Calu3 (cell line): ENCODE measurements at regions of chr5 and their contacts with region 1.

Region 1: DNA sequence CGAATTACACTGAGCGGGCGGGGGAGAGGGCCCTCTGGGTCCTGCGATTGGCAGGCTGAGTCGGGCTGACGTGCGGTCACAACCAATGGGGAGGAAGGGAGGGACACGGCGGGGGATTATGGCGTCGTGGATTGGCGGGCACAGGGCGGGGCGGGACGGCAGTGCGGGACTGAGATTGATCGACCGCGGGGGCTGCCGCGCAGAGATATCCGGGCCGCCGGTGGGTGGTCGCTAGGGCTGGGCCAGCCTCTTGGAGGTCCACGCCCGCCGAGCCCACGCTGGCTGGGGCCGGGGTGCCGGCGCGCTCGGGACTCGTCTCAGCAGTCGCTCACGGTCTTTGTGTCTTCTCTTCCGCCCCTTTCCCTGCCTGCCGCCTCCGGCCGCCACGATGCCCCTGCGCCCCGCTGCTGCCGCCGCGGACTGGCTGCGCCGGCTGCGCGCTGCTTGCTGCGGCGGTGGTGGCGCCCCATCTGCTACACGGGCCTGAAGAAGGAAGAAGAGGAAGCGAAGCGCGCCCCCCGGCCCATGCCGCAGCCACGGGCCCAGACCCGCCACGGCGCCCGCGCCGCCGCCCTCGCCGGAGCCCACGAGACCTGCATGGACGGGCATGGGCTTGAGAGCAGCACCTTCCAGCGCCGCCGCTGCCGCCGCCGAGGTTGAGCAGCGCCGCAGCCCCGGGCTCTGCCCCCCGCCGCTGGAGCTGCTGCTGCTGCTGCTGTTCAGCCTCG is at the start of gene RGMB:
- DNase-seq: peak; percentile 99
- H3K4me3 Mint-ChIP-seq: peak within 1 kb of the TSS; percentile 82
- H3K27ac Mint-ChIP-seq: peak within 1 kb of the TSS; percentile 70
- H3K4me1 Mint-ChIP-seq: peaks cover 47% of the 10 kb centered on the region
- H3K27me3 Mint-ChIP-seq: no peaks in the 10 kb centered on the region
- CTCF ChIP-seq: no peak
- total RNA-seq, gene RGMB: 34.5 and 35.8 TPM in 2 replicates

Region 2: DNA sequence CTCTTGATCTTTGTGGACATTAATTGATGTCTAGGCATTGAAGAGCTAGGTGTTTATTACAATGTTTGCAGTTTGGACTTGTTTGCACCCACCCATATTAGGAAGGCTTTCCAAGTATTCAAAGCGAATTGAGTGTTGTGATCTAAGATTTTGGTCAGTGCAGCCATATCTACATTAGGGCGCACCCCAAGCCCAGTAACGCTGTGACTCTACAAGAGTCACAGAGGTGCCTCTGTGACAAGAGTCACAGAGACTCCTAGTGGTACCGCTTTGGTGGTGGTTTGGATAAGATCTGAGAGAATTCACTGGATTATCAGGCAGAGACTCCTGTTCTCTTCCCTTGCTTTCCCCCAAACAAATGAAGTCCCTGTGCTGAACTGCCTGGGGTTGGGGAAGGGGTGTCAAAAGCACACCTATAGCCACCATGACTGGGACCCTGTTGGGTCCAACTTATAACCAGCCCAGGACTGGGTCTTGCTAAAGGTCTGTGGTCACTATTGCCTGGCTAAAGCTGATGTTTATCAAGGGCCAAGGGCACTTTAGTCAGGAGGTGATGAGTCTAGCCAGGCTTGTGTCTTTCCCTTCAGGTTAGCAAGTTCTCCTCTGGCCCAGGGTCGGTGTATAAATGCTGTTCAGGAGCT is 1476.4 kb before region 1 on chr5:
- CTCF ChIA-PET with region 1: no interaction called
- intact Hi-C with region 1: loop called (anchors 1 kb)
- DNase-seq: peak; percentile 63
- H3K4me3 Mint-ChIP-seq: no peak overlapping the region
- H3K27ac Mint-ChIP-seq: no peak overlapping the region
- H3K4me1 Mint-ChIP-seq: no peaks in the 10 kb centered on the region
- H3K27me3 Mint-ChIP-seq: no peaks in the 10 kb centered on the region
- CTCF ChIP-seq: peak; percentile 59

Region 3: DNA sequence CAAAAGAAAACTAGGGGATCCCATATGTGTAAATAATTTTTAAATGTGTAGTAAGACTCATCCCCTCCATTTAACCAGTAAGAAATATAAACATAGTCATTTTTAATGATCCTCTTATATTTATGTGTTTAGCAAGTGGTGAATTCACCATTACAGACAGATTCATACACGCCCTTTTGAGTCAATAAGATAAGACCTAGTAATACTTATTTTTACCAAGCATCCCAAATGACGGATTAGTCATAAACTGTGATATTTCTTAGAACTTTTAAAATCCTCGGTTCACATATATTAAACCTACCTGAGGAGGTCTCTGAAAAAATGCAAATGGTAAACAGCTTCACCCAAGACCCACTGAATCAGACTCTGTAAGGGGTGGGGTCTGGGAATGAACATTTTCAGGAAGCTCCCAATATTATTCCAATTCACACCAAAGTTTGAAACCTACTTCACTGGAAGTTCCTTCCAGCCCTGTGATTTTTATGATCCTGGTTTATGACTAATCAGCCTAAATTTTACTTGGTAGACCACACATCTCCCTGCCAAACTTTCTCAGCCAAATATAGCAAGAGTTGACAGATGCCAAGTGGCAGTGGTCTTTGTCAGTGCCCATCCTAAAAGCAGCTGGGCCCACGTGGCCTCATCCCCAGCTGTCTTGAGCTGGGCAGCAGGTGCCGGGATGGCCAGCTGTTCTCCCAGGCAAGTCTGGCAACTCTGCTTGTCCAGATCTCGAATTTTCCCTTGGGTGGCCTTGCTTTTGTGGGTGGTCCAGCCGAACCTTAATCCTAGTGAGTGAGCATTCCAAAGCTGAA is 559.2 kb before region 1 on chr5:
- CTCF ChIA-PET with region 1: no interaction called
- intact Hi-C with region 1: loop called (anchors 5 kb)
- DNase-seq: no peak
- H3K4me3 Mint-ChIP-seq: no peak overlapping the region
- H3K27ac Mint-ChIP-seq: no peak overlapping the region
- H3K4me1 Mint-ChIP-seq: no peaks in the 10 kb centered on the region
- H3K27me3 Mint-ChIP-seq: no peaks in the 10 kb centered on the region
- CTCF ChIP-seq: no peak

Region 4: GRCh38 chr5:98556712-98557111 is 216.9 kb before region 1 on chr5:
- CTCF ChIA-PET with region 1: no interaction called
- intact Hi-C with region 1: no loop called
- DNase-seq: no peak
- H3K4me3 Mint-ChIP-seq: no peak overlapping the region
- H3K27ac Mint-ChIP-seq: no peak overlapping the region
- H3K4me1 Mint-ChIP-seq: no peaks in the 10 kb centered on the region
- H3K27me3 Mint-ChIP-seq: no peaks in the 10 kb centered on the region
- CTCF ChIP-seq: no peak

Region 5: DNA sequence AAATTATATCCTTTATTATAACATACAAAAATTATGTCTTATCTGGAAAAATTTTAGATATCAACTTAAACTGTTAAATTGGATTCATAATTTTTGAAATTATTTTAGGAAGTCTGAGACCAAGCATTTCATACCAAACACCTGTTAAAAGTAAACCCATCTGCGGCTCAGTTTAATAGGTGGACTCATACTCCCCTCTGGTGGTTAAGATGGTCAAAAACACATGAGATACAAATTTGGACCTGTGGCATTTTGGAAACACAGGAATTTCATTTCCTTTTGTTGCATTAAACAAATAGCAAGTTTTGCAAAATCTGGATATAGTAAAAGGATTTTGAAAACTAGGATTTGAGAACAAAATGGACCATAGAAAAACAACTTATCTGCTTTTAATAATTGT is 53.5 kb after region 1 on chr5:
- CTCF ChIA-PET with region 1: no interaction called
- intact Hi-C with region 1: loop called (anchors 1 kb)
- DNase-seq: peak; percentile 39
- H3K4me3 Mint-ChIP-seq: no peak overlapping the region
- H3K27ac Mint-ChIP-seq: no peak overlapping the region
- H3K4me1 Mint-ChIP-seq: no peaks in the 10 kb centered on the region
- H3K27me3 Mint-ChIP-seq: no peaks in the 10 kb centered on the region
- CTCF ChIP-seq: peak; percentile 29

Region 6: DNA sequence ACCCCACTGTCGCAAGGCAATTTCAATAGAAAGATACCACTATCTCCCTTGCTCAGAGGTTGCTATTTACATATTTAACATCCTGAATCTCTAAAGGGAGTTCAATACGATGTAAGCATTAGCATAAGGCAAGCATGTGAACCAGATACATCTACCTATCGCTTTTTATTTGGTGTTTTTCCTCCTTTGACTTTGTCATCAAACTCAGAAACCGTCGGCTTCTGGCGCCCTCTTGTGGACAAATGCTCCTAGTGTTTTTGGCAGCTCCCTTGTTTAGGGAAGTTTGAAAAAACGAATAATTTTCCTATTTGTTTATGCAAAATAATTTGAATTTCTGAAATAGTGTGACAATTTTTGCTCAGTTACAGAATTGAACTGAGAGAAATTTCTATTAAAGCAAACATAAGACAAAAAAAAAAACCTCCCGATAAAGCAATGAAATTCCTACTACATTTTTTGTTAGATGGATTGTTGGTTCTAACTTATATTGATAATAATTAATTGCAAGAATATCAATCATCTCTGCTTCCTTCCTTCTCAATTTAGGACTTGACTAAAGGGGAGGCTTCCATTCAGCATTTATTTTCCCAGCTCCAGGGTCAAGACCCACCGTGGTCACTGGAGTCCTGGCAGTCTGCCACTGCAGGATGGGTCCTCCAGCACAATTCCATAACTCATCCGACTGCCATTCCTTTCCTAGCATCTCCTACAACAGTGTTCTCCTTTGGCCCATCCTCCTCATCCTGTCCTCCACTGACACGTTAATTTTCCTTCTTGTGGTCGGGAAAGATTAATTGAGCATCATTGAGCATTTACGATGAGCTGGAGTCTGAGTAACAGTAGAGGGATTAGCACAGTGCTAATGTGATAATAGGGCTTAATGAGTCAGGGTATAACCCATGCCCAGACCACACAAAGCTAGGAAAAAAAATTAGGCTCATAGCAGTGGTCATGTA is 287.0 kb after region 1 on chr5:
- CTCF ChIA-PET with region 1: interaction called, 3 read pairs
- intact Hi-C with region 1: loop called (anchors 5 kb)
- DNase-seq: peak; percentile 87
- H3K4me3 Mint-ChIP-seq: no peak overlapping the region
- H3K27ac Mint-ChIP-seq: no peak overlapping the region
- H3K4me1 Mint-ChIP-seq: peaks cover 18% of the 10 kb centered on the region
- H3K27me3 Mint-ChIP-seq: no peaks in the 10 kb centered on the region
- CTCF ChIP-seq: peak; percentile 92

Region 7: GRCh38 chr5:99258819-99259218 is 485.2 kb after region 1 on chr5:
- CTCF ChIA-PET with region 1: no interaction called
- intact Hi-C with region 1: no loop called
- DNase-seq: no peak
- H3K4me3 Mint-ChIP-seq: no peak overlapping the region
- H3K27ac Mint-ChIP-seq: no peak overlapping the region
- H3K4me1 Mint-ChIP-seq: no peaks in the 10 kb centered on the region
- H3K27me3 Mint-ChIP-seq: no peaks in the 10 kb centered on the region
- CTCF ChIP-seq: no peak